ENCODE measurements at regions of chr2 and their contacts with region 1.

Region 1: DNA sequence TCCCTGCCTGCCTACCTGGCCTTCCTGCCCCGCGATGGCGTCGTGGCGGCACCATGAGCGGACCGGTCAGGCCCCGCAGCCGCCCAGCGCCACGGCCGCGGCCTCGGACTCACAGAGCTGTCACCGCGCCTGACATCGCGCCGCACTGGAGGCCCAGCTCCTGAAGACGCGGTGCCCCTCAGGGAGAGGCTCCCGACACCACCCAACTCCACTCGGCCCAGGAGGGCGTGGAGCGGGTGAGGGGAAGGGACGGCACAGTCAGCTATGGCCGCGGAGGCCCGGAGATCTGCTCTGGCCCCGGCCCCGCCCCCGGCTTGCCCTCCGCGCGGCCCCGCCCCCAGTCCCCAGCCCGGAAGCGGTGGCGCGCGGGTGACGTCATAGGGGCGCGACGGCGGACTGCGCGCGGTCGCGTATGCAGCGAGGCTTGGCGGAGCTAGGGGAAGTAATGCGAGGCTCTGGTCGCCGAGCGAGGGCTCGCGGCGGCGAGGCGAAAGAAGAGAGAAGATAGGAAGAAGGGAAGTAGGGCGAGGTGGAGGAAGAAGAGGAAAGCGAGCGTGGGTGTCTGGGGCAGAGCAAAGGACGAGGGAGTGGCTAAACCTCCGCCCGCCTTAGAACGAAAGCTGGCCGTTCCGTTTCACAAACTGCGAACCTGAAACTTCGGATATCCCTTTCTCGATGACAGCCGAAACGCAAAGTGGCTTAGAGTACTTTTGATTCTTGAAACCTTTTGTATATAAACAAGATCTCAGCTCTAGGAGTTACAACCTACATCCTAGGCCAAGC is at the start of gene SLC35F5:
- DNase-seq: peak; percentile 38 to 91
- ATAC-seq: peak; percentile 96 to 99
- H3K4me3 ChIP-seq: peak within 1 kb of the TSS; percentile 77
- H3K27ac ChIP-seq: peak within 1 kb of the TSS; percentile 89 to 94
- H3K4me1 ChIP-seq: peaks cover 15% of the 10 kb centered on the region
- CTCF ChIP-seq: no peak
- EP300 ChIP-seq: 0 out of 5 replicates have a peak, but pooled peaks of 1 of the 2 experiments have one; percentile 11
- POLR2A ChIP-seq: peak; percentile 80
- RAD21 ChIP-seq: peak; percentile 4 to 52; a peak in 3 of 5 replicates
- polyA plus RNA-seq, gene SLC35F5: 86.6 and 90.0 TPM in 2 replicates

Region 2: GRCh38 chr2:113720167-113720566 is 36.4 kb before region 1 on chr2:
- CTCF ChIA-PET with region 1: no interaction called
- POLR2A ChIA-PET with region 1: no interaction called
- DNase-seq: peak; percentile 18 to 33
- ATAC-seq: peak; percentile 63 to 64; a peak in 5 of 6 replicates
- H3K4me3 ChIP-seq: no peak overlapping the region
- H3K27ac ChIP-seq: no peak overlapping the region
- H3K4me1 ChIP-seq: no peaks in the 10 kb centered on the region
- CTCF ChIP-seq: peak; percentile 59
- EP300 ChIP-seq: no peak
- POLR2A ChIP-seq: no peak
- RAD21 ChIP-seq: peak; percentile 47; a peak in 4 of 5 replicates

Region 3: DNA sequence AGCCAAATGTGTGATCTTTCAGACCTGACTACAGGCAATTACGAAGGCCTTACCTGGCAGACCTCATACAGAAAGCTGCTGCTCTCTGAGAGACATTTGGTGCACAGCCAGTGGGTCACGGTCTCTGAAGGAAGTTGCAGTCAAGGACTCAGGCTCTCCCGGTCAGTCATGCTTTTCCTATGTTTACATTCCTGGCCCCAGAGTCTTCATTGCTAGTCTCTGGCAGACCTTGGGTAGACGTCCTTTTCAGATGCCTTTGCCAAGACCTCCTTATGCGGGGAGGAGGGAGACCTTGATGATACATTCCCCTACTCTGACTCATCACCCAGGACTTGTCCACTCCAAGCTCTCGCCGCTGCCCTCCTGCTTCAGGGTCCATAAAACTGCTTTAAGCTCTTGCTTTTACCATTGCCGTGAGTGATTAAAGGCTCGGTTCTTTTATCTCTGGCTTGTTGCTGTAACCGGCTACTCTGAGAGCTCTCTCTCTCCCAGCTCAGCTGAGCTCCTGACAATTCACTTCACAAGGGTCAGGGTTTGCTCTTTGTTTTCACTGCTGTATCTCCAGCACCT is 61.9 kb after region 1 on chr2:
- CTCF ChIA-PET with region 1: no interaction called
- POLR2A ChIA-PET with region 1: interaction called, 23 read pairs
- DNase-seq: peak; percentile 60 to 86
- ATAC-seq: peak; percentile 98
- H3K4me3 ChIP-seq: 0 out of 3 replicates have a peak overlapping the region, but pooled peaks have one; percentile 5
- H3K27ac ChIP-seq: peak overlapping the region; percentile 75 to 78
- H3K4me1 ChIP-seq: peaks cover 18% of the 10 kb centered on the region
- CTCF ChIP-seq: no peak
- EP300 ChIP-seq: peak in 1 of 2 experiments; percentile 52; a peak in 1 of 5 replicates
- POLR2A ChIP-seq: no peak
- RAD21 ChIP-seq: peak in 1 of 2 experiments; percentile 43; a peak in 2 of 5 replicates

Region 4: DNA sequence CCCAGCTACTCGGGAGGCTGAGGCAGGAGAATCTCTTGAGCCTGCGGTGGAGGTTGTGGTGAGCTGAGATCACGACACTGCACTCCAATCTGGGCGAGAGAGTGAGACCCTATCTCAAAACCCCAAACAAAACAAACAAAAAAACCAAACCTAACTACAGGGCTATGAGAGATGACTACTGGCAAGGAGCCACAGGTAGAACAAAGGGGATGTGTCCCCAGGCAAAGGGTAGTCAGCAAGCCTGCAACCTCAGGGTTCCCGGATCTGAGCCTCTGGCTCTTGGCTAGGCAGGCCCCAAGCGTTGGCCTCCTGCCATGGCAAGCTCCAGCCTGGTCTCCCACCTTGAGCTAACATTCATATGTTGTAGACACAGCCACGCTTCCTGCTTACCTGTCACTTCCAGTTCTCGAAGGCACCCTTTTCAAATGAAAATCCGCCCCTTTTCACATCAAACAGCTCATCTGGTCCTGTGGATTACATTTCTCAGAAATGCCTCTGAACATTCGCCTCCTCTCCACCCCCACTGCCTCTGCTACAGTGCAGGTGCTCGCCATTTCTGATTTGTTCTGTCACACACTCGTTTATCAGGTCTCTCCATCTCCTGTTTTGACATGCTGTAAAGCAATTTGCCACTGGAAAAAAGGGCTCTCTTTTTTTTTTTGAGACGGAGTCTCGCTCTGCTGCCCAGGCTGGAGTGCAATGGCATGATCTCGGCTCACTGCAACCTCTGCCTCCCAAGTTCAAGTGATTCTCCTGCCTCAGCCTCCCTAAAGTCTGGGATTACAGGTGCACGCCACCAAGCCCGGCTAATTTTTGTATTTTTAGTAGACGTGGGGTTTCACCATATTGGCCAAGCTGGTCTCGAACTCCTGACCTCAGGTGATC is 120.2 kb after region 1 on chr2:
- CTCF ChIA-PET with region 1: no interaction called
- POLR2A ChIA-PET with region 1: interaction called, 10 read pairs
- DNase-seq: no peak
- ATAC-seq: peak in 1 of 2 experiments; percentile 49; a peak in 4 of 6 replicates
- H3K4me3 ChIP-seq: no peak overlapping the region
- H3K27ac ChIP-seq: peak overlapping the region in 1 of 2 experiments; percentile 52; a peak in 4 of 6 replicates
- H3K4me1 ChIP-seq: peaks cover 29% of the 10 kb centered on the region
- CTCF ChIP-seq: no peak
- EP300 ChIP-seq: no peak
- POLR2A ChIP-seq: no peak
- RAD21 ChIP-seq: no peak

Region 5: DNA sequence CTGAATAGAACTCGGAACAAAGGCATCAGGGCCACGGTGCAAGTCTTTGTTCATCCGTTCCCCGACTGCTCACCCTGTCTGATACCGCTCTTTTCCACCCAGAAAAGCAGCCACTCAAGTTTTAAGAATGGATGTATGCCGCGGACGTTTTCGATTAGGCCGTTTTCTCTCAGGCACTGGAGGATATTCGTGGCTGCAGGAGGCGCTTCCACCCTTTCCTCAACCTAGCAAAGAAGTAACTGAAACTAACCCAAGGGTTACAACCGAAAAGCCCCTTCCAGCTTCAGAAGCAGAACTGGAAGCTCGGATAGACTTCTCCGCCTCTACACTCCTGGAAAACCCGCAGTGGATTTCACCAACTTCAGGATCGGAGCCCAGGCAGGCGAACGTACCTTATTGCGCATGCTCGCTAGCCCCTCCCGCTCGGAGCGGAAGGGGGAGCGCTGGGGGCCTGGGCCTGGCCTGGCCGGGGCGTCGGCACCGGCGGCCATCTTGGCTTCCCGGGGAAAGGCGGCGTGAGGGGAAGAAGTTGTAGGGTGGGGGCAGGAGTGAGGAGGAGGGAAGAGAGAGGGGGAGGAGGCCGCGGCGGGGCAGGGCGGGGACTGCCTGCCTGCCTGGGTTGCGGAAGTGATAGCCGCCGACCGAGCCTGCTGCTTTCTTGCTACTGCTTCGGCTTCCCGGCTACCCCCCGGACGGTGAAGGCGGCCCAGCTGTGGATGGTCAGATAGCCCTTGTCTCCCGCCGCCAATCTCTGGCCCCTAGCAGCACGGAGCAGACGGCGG is 133.1 kb after region 1 on chr2 and contains the start of gene ACTR3:
- CTCF ChIA-PET with region 1: interaction called, 5 read pairs
- POLR2A ChIA-PET with region 1: interaction called, 43 read pairs
- DNase-seq: peak; percentile 76 to 98
- ATAC-seq: peak; percentile 88 to 93
- H3K4me3 ChIP-seq: peak within 1 kb of the TSS; percentile 93
- H3K27ac ChIP-seq: peak within 1 kb of the TSS; percentile 93 to 98
- H3K4me1 ChIP-seq: peaks cover 51% of the 10 kb centered on the region
- CTCF ChIP-seq: 0 out of 3 replicates have a peak, but pooled peaks have one; percentile 5
- EP300 ChIP-seq: no peak
- POLR2A ChIP-seq: peak; percentile 80
- RAD21 ChIP-seq: no peak; a peak in 3 of 5 replicates
- polyA plus RNA-seq, gene ACTR3: 282 and 412 TPM in 2 replicates

Measured in A549 (cell line).